ENCODE measurements at regions of chr1 and their contacts with region 1.

Region 1: GRCh38 chr1:1841575-1841995 is 49.3 kb downstream of the GNB1 start:
- DNase-seq: no peak
- H3K4me3 Mint-ChIP-seq: peak overlapping the region; percentile 56
- H3K27ac Mint-ChIP-seq: peak overlapping the region; percentile 77
- H3K4me1 Mint-ChIP-seq: peaks cover 30% of the 10 kb centered on the region
- H3K27me3 Mint-ChIP-seq: no peaks in the 10 kb centered on the region

Region 2: DNA sequence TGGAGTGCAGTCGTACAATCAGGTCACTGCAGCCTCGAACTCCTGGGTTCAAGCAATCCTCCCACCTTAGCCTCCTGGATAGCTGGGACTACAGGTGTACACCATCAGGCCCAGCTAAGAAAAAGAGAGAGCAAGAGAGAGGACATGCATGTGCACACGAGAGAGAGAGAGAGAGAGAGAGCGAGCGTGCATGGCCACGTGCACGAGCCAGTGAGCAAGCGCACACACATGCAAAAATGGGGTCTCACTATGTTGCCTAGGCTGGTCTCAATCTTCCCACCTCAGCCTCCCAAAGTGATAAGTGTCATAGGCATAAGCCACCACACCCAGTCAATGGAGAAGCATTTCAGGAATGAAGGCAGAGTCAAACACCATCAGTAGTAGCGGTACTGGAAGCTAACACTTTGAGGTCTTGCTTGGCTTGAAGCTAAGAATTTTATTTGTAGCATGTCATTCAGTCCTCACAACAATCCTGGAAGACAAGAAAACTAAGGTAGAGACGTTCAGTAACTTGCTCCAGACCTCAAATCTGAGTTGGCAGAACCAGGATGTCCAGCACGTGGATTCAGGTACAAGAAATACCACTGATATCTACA is 34.8 kb after region 1 on chr1:
- intact Hi-C with region 1: loop called (anchors 5 kb)
- DNase-seq: no peak
- H3K4me3 Mint-ChIP-seq: peak overlapping the region; percentile 58
- H3K27ac Mint-ChIP-seq: peak overlapping the region; percentile 89
- H3K4me1 Mint-ChIP-seq: peaks cover 58% of the 10 kb centered on the region
- H3K27me3 Mint-ChIP-seq: no peaks in the 10 kb centered on the region

Region 3: DNA sequence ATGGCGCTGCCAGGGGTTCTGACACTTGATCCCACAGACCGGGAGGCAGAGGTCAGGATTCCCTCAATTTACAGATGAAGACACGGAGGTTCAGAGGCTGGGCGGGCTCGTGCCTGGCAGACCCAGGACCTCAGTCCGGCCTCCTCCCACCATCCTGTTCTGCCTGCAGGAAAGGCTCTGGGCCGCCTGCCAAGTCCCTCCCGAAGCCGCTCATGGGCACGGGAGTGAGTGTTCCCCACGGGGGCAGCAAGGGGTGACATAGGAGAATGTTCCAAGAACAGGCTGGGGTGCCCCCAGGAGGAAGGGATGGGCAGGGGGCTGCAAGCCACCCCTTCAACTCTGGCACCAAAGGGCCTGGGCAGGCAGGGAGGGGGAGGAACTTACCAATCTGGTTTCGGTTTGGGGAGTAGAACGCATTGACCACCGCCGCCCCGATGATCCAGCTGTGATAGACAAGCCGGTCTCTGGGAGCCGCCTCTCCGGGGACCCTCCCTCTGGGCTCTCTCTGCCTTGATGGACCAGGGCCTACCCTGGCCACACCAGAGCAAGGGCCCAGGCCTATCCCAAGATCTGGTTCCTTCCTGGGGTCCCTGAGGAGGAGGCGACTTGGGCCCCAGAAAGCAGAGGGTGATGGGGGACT is 752.5 kb after region 1 on chr1:
- intact Hi-C with region 1: no loop called
- DNase-seq: no peak
- H3K4me3 Mint-ChIP-seq: no peak overlapping the region
- H3K27ac Mint-ChIP-seq: no peak overlapping the region
- H3K4me1 Mint-ChIP-seq: no peaks in the 10 kb centered on the region
- H3K27me3 Mint-ChIP-seq: peaks cover 2% of the 10 kb centered on the region

Measured in activated T-helper 1 cell treated with anti-CD3 and anti-CD28 coated beads, Interleukin-12 subunit alpha, Interleukin-12 subunit beta, Interleukin-2, Interleukin-4 antibody, amounts not matched to agents 30 ng/mL and 10 ng/mL and 1 ng/mL, durations not matched to agents 14 hours and 24 hours and 36 hours (primary cell).